OCI-LY7 (cell line): ENCODE measurements at regions of chr11 and their contacts with region 1.

Region 1: GRCh38 chr11:119101759-119102423 is at the start of gene DPAGT1:
- DNase-seq: peak; percentile 93
- H3K4me3 ChIP-seq: peak within 1 kb of the TSS; percentile 88
- H3K27ac ChIP-seq: peak within 1 kb of the TSS; percentile 86
- H3K4me1 ChIP-seq: peaks cover 49% of the 10 kb centered on the region
- CTCF ChIP-seq: no peak
- total RNA-seq, gene DPAGT1: 31.7 and 35.8 TPM in 2 replicates

Region 2: GRCh38 chr11:118699506-118700220 is 402.2 kb before region 1 on chr11:
- CTCF ChIA-PET with region 1: no interaction called
- POLR2A ChIA-PET with region 1: no interaction called
- intact Hi-C with region 1: no loop called
- DNase-seq: no peak
- H3K4me3 ChIP-seq: no peak overlapping the region
- H3K27ac ChIP-seq: no peak overlapping the region
- H3K4me1 ChIP-seq: peaks cover 6% of the 10 kb centered on the region
- CTCF ChIP-seq: no peak

Region 3: GRCh38 chr11:118930094-118930712 is 171.7 kb before region 1 on chr11:
- CTCF ChIA-PET with region 1: no interaction called
- POLR2A ChIA-PET with region 1: no interaction called
- intact Hi-C with region 1: no loop called
- DNase-seq: peak; percentile 89
- H3K4me3 ChIP-seq: peak overlapping the region; percentile 71
- H3K27ac ChIP-seq: peak overlapping the region; percentile 76
- H3K4me1 ChIP-seq: peaks cover 39% of the 10 kb centered on the region
- CTCF ChIP-seq: peak; percentile 96

Region 4: DNA sequence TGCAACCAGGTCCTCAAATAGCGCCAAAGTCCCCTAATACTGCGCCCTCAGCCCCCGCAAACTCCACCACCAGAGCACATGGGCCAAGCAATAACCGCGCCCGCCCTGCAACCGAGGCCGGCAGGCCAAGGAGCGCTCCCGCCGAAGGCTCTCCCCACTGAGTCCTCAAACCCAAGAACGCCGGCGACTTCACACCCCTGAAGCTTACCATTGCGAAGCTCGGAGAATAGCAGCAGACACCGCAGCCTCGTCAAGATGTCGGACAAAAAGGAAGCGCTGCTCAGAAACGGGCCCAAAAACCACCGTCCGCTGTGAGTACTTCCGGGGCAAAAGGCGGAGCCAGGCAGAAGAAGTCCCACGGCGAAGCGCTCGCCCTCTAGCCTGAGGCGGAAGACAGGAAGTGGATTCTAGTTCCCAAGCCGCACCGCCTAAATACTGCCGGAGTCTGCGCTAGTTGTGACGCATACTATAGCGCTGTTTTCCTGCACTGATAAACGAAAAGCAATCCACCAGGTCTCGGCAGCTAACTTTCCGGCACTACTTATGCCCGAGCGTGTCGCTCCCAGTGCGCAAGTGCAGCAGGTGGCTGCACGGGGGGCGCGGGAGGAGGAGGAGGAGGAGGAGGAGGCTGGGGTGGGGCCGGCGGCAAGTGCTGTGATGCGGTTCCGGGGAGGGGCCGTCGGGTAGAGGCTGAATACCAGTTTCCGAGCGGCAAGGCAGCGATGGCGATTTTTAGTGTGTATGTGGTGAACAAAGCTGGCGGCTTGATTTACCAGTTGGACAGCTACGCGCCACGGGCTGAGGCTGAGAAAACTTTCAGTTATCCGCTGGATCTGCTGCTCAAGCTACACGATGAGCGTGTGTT is 83.6 kb before region 1 on chr11 and contains the starts of genes RPS25 and TRAPPC4:
- CTCF ChIA-PET with region 1: no interaction called
- POLR2A ChIA-PET with region 1: interaction called, 3 read pairs
- intact Hi-C with region 1: loop called (anchors 2 kb)
- DNase-seq: peak; percentile 97
- H3K4me3 ChIP-seq: peak within 1 kb of the TSS; percentile 81
- H3K27ac ChIP-seq: peak within 1 kb of the TSS; percentile 90
- H3K4me1 ChIP-seq: peaks cover 29% of the 10 kb centered on the region
- CTCF ChIP-seq: no peak
- total RNA-seq, gene RPS25: 1,395 and 1,541 TPM in 2 replicates
- total RNA-seq, gene TRAPPC4: 49.3 and 64.3 TPM in 2 replicates

Region 5: GRCh38 chr11:119057000-119057769 is 44.7 kb before region 1 on chr11 and contains the start of gene HYOU1:
- CTCF ChIA-PET with region 1: no interaction called
- POLR2A ChIA-PET with region 1: interaction called, 7 read pairs
- intact Hi-C with region 1: loop called (anchors 2 kb)
- DNase-seq: peak; percentile 99
- H3K4me3 ChIP-seq: peak within 1 kb of the TSS; percentile 82
- H3K27ac ChIP-seq: peak within 1 kb of the TSS; percentile 65
- H3K4me1 ChIP-seq: peaks cover 13% of the 10 kb centered on the region
- CTCF ChIP-seq: peak; percentile 50; the same call in 1 of the 2 replicates
- total RNA-seq, gene HYOU1: 86.6 and 97.6 TPM in 2 replicates

Region 6: DNA sequence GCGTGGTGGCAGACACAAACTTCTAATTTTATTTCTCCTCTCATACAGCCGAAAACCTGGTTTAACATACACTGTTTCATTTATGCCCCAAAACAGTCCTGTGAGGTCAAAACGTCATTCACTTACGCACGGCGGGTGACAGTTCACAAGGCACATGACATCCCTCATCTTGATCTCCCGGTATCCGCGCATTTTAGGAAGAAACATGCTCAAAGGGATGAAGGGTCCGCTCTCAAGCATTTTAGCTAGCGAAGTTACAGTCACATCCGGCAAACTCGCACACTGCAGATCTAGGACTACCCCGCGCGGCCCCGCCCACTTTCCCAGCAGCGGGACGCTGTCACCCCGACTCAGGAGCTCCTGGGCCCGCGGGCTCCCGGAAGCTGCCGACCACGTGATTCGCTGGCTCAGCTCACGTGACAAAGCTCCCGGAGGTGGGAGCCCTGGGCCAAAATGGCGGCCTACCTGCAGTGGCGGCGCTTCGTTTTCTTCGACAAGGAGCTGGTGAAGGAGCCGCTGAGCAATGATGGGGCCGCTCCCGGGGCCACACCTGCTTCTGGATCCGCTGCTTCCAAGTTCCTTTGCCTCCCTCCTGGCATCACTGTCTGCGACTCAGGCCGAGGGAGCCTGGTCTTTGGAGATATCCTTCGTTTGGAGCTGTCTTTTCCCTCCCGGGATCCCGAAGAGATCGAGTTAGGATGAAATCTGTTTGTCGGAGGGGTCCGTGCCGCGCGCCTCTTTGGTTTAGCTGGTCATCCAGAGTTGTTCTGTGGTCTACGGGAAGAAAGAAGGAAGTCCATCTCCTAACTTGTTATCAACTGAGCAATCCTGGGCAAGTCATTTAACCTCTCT is 34.3 kb before region 1 on chr11 and contains the start of gene VPS11:
- CTCF ChIA-PET with region 1: no interaction called
- POLR2A ChIA-PET with region 1: interaction called, 6 read pairs
- intact Hi-C with region 1: loop called (anchors 1 kb)
- DNase-seq: peak; percentile 98
- H3K4me3 ChIP-seq: peak within 1 kb of the TSS; percentile 83
- H3K27ac ChIP-seq: peak within 1 kb of the TSS; percentile 75
- H3K4me1 ChIP-seq: peaks cover 23% of the 10 kb centered on the region
- CTCF ChIP-seq: no peak
- total RNA-seq, gene VPS11: 32.2 and 46.1 TPM in 2 replicates

Region 7: GRCh38 chr11:119121008-119121810 is 19.3 kb after region 1 on chr11 and contains the start of gene HINFP:
- CTCF ChIA-PET with region 1: interaction called, 4 read pairs
- POLR2A ChIA-PET with region 1: interaction called, 12 read pairs
- intact Hi-C with region 1: no loop called
- DNase-seq: peak; percentile 99
- H3K4me3 ChIP-seq: peak within 1 kb of the TSS; percentile 84
- H3K27ac ChIP-seq: no peak within 1 kb of the TSS
- H3K4me1 ChIP-seq: peaks cover 16% of the 10 kb centered on the region
- CTCF ChIP-seq: no peak
- total RNA-seq, gene HINFP: 18.2 and 27.7 TPM in 2 replicates

Region 8: DNA sequence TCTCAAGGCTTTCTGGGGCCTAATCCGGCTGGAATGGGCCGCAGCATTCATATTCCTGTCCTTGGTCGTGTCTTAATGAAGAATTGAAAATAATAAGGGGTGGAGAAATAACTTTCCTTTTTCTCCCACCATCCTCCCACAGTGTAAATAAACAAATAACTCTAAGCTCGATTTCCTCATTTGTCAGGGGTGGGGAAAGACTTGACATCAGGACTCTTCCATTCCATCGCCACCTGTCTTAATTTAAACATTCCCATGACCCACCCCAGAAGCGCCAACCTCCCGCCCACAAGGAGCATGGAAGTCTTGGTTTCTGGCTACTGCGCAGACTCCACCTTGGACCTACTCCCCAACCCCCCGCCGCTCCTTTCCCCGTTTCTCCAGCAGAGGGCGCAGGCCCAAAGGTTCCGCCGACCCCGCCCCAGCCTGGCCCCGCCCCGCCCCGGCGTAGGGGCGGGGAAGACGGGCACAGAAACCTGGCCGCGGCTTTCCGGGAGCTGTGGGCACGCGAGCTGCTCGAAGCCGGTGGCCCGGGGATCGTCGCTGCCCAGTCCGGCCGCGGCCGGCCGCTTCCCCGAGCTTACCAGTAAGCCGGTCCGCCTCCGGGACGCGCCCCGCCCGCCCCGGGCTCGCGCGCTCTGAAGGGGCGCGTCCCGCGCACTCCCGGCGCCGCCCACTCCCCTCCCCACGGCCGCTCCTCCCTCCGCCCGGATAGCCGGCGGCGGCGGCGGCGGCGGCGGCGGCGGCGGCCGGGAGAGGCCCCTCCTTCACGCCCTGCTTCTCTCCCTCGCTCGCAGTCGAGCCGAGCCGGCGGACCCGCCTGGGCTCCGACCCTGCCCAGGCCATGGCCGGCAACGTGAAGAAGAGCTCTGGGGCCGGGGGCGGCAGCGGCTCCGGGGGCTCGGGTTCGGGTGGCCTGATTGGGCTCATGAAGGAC is 104.0 kb after region 1 on chr11 and contains the start of gene CBL:
- CTCF ChIA-PET with region 1: no interaction called
- POLR2A ChIA-PET with region 1: interaction called, 3 read pairs
- intact Hi-C with region 1: loop called (anchors 2 kb)
- DNase-seq: peak; percentile 92
- H3K4me3 ChIP-seq: peak within 1 kb of the TSS; percentile 100
- H3K27ac ChIP-seq: peak within 1 kb of the TSS; percentile 78
- H3K4me1 ChIP-seq: peaks cover 31% of the 10 kb centered on the region
- CTCF ChIP-seq: peak; percentile 89
- total RNA-seq, gene CBL: 19.1 and 19.2 TPM in 2 replicates